RWPE1 (cell line): ENCODE measurements at regions of chr19 and their contacts with region 1.

Region 1: DNA sequence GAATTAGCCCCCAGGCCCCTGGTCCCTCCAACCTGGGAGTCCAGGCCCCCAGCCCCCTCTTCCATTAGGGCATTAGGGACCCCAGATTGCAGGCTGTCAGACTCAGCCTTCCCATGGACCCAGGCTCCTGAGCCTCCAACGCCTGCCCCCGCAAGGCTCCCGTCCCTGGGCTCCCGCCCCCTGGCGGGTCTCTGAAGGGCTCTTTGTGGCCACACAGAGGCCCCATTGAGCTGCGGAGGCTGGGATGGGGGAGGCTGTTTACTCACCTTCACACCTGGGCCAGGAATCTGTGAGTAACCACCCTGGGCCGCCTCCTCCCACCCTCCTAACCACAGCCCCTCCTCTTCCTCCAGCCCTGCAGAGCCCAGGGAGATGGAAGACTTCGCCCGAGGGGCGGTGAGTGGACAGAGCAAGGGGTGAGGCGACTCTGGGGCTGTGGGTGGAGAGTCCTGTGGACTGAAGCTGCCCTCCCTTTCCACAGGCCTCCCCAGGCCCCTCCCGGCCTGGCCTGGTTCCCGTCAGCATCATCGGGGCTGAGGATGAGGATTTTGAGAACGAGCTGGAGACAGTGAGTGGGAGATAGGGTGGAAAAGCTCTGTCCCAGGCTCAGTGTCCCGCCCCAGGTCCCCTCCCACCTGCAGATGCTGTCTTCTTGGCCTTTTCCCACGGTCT is 4.9 kb downstream of the ARHGEF1 start:
- DNase-seq: peak; percentile 96
- H3K27ac ChIP-seq: peak overlapping the region; percentile 91
- CTCF ChIP-seq: no peak

Region 2: DNA sequence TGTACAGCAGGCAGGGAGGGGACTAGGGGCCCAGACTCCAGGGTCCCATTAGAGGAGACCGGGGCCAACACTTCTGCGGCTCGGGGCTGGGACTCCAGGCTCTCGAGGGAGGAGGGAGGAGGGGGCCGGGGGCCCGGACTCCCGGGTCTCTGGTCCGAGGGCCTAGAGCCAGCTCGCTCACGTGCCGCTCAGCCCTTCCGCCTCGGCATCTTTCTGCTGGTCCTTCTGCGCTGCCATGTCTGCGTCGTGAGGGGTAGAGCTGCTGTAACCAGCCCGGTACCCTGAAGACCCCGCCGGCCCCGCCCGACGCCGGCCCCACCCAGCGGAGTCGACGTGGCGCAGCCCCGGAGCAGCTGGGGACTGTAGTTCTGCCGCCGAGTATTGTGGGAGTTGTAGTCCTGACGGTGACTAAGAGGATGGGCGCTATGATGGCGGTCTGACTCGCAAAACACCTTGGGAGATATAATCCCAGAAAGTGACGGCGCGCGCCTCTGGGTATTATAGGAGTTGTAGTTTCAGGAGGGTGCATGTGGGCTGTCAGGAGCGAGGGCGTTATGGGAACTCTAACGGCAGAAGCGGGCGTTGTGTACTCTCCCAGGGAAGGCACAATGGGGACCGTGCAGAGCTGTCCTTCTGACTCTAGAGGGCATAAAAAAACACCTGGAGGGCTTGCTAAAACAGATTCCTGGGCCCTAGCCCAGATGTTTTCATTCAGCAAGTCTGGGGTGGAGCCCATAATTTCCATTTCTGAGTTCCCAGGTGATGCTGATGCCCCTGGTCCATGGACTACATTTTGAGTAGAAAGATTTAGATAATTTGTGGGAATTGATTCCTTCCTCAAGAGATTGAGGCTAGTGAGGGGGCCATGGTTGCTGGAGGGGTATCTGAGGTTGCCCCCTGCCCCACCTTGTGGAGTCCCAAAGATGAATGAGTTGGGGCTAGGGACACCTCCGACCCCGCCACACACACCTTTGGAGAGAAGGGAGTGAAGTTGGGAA is 71.5 kb after region 1 on chr19 and contains the start of gene RABAC1:
- CTCF ChIA-PET with region 1: interaction called, 14 read pairs
- POLR2A ChIA-PET with region 1: no interaction called
- DNase-seq: peak; percentile 82
- H3K27ac ChIP-seq: peak within 1 kb of the TSS; percentile 83
- CTCF ChIP-seq: no peak